GM10248 (cell line): ENCODE measurements at regions of chr13 and their contacts with region 1.

Region 1: DNA sequence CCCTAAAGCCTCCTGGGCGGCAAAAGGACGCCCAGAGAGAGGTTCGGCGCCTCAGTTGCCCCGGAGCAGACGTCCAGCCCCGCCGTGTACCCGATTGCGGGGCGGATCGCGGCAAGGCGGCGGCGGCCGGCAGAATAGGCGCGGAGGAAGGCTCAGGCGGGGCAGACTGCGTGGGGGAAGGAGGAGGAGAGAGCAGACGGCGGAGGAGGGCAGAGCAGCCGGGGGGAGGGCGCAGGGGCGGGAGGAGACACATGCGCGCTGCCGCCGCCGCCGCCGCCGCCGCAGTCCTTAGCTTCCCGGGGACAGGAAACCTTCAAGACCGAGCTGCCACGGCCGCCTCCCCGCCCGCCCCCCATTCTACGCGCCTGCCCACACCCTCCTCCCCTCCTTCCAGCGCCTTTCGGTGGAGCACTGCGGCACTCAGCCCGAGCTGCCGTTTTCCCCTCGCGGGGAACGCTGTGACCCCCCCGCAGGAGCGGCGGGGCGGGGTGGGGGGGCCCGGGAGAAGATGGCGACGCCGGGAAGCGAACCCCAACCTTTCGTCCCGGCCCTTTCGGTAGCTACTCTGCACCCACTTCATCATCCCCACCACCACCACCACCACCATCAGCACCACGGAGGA is at the start of gene LRCH1:
- DNase-seq: peak; percentile 93
- CTCF ChIP-seq: no peak

Region 2: GRCh38 chr13:45615501-45616101 is 937.4 kb before region 1 on chr13 and contains the start of gene ERICH6B:
- CTCF ChIA-PET with region 1: no interaction called
- POLR2A ChIA-PET with region 1: no interaction called
- DNase-seq: no peak
- CTCF ChIP-seq: no peak

Region 3: DNA sequence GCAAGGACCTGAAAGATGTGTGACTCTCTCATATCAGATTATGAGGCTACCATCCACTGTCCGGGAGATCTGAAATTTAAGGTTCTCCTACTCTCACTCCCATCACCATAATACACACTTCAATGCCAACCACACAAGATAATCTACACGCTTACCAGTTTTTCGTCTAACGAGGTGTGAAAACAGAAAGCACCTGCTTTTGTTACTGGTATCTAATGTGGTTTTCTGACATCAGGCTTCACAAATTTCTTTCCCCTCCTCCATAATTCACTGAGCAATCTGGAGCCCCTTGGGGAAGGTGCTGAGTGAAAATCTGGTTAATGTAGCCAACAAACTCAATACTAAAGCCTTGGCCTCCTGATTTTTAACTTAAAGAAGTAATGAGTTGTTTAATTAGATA is 10.2 kb before region 1 on chr13:
- CTCF ChIA-PET with region 1: interaction called, 11 read pairs
- POLR2A ChIA-PET with region 1: no interaction called
- DNase-seq: no peak
- CTCF ChIP-seq: no peak

Region 4: GRCh38 chr13:46571189-46571908 is 18.3 kb after region 1 on chr13:
- CTCF ChIA-PET with region 1: interaction called, 21 read pairs
- POLR2A ChIA-PET with region 1: interaction called, 3 read pairs
- DNase-seq: peak; percentile 34
- CTCF ChIP-seq: no peak

Region 5: GRCh38 chr13:46587807-46588418 is 34.9 kb after region 1 on chr13:
- CTCF ChIA-PET with region 1: interaction called, 17 read pairs
- POLR2A ChIA-PET with region 1: interaction called, 5 read pairs
- DNase-seq: peak; percentile 23
- CTCF ChIP-seq: no peak

Region 6: GRCh38 chr13:46721054-46721453 is 168.1 kb after region 1 on chr13:
- CTCF ChIA-PET with region 1: interaction called, 24 read pairs
- POLR2A ChIA-PET with region 1: no interaction called
- DNase-seq: peak; percentile 21
- CTCF ChIP-seq: peak; percentile 52